ENCODE measurements at regions of chr1 and their contacts with region 1.

Region 1: GRCh38 chr1:154220071-154220969 is at the start of gene UBAP2L:
- H3K4me3 Mint-ChIP-seq: peak within 1 kb of the TSS; percentile 98
- H3K27ac Mint-ChIP-seq: peak within 1 kb of the TSS; percentile 97
- H3K4me1 Mint-ChIP-seq: peaks cover 43% of the 10 kb centered on the region
- H3K27me3 Mint-ChIP-seq: no peaks in the 10 kb centered on the region

Region 2: GRCh38 chr1:154183045-154183915 is 37.0 kb before region 1 on chr1:
- intact Hi-C with region 1: loop called (anchors 2 kb)
- H3K4me3 Mint-ChIP-seq: peak overlapping the region; percentile 99
- H3K27ac Mint-ChIP-seq: peak overlapping the region; percentile 97
- H3K4me1 Mint-ChIP-seq: peaks cover 45% of the 10 kb centered on the region
- H3K27me3 Mint-ChIP-seq: no peaks in the 10 kb centered on the region

Region 3: DNA sequence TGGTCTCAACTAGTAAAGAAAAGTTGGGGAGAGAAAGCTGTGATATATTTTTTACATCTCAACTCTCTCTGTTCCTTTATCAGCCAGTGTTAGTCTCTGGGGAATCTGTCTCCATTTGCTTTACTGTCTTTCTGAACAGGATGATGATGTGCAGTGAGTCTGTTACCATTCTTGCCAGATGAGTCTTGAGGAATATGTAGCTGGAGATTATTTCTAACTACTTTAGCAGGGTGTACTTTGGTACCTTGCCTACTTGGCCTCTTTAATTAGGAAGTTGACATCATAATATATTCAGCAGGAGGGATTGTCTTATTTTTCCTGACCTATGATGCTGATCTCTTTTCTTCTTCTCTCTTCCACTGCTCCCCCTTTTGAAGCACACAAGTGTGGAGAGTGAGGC is 36.4 kb after region 1 on chr1:
- intact Hi-C with region 1: no loop called
- H3K4me3 Mint-ChIP-seq: no peak overlapping the region
- H3K27ac Mint-ChIP-seq: no peak overlapping the region
- H3K4me1 Mint-ChIP-seq: peaks cover 10% of the 10 kb centered on the region
- H3K27me3 Mint-ChIP-seq: no peaks in the 10 kb centered on the region

Region 4: GRCh38 chr1:154386643-154387352 is 166.5 kb after region 1 on chr1:
- intact Hi-C with region 1: no loop called
- H3K4me3 Mint-ChIP-seq: no peak overlapping the region
- H3K27ac Mint-ChIP-seq: peak overlapping the region; percentile 29
- H3K4me1 Mint-ChIP-seq: peaks cover 34% of the 10 kb centered on the region
- H3K27me3 Mint-ChIP-seq: no peaks in the 10 kb centered on the region

Region 5: DNA sequence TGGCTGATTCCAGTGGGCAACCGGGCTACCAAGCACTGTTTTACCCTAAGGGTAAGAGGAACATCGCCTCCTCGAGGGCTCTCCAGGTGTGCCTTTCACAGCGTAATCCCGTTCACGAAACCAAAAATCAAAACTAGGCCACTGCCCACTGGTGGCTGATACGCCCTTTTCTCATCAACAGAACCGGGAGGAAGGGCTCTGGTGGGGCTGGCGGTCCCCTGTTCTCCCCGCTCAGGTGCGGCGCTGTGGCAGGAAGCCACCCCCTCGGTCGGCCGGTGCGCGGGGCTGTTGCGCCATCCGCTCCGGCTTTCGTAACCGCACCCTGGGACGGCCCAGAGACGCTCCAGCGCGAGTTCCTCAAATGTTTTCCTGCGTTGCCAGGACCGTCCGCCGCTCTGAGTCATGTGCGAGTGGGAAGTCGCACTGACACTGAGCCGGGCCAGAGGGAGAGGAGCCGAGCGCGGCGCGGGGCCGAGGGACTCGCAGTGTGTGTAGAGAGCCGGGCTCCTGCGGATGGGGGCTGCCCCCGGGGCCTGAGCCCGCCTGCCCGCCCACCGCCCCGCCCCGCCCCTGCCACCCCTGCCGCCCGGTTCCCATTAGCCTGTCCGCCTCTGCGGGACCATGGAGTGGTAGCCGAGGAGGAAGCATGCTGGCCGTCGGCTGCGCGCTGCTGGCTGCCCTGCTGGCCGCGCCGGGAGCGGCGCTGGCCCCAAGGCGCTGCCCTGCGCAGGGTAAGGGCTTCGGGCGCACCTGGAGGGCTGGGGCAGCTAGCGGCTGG is 184.9 kb after region 1 on chr1 and contains the start of gene IL6R:
- intact Hi-C with region 1: no loop called
- H3K4me3 Mint-ChIP-seq: peak within 1 kb of the TSS; percentile 97
- H3K27ac Mint-ChIP-seq: peak within 1 kb of the TSS; percentile 97
- H3K4me1 Mint-ChIP-seq: peaks cover 79% of the 10 kb centered on the region
- H3K27me3 Mint-ChIP-seq: no peaks in the 10 kb centered on the region

Region 6: DNA sequence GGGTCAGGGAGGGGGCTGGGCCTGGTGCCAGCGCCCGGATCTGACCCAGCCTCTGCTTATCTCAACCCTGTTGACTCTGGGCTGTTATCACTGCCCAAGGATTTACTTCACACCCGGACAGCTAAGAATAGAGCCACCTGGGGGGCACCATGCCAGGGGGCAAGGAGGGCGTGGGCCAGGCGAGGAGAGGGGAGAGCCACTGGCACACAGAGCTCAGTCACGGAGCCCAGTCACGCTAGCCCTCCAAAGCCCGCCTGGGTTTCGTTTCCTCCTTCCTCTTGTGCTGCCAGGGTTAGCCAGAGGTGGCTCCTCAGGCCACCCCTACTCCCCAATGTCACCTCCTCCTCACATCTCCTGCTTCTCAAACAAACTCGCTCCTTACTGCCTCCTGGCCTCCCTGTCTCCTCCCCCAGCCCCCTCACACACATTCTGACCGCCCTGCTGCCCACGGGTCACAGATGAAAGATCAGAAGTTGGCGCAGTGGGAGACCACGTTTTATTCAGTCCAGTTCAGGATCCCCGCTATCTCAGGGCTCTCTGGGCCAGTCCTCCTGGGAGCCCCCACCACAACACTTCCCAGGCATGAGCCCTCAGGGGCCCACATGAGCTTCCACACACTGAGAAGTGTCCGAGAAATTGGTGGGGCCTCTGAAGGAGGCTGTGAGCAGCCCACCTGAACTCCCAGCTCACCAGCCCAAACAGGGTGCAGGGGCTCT is 965.2 kb after region 1 on chr1:
- intact Hi-C with region 1: no loop called
- H3K4me3 Mint-ChIP-seq: peak overlapping the region; percentile 28
- H3K27ac Mint-ChIP-seq: peak overlapping the region; percentile 83
- H3K4me1 Mint-ChIP-seq: peaks cover 65% of the 10 kb centered on the region
- H3K27me3 Mint-ChIP-seq: peaks cover 27% of the 10 kb centered on the region